ENCODE measurements at regions of chr1 and their contacts with region 1.

Region 1: DNA sequence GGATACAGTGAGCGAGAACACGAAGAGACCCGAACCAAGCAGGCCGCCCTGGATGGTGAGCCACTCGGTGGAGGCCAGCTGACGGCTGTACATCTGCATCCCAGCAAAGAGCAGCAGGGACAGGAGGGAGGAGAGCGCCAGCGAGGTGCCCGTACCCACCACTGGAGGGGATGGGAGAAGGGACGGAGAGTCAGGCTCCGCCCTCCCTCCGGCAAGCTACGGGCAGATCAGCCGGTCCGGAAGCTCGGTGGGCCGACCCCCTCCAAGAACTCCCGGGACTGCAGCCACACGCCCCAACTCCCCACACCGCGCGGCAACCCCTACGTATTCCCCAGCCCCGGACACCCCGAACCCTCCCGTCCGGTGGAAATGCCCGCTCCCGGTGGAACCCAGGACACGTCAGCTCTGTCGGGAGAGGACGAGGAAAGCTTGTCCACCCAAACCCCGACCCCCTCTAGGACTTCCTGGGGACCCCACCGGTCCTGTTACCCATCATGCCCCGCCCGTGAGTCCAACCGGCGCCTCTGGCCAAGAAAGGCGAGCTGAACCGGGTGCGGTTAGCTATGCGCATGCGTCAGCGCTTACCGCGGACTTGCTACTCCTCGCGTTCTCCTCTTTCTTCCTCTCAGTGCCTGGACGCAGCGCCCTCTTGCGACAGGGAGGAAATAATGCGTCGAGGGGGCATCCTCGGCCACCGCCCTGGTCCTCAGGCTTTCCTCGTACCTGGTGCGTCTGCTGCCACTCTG is at the start of gene KRTCAP2:
- DNase-seq: peak; percentile 92 to 95 (median 93)
- H3K4me3 ChIP-seq: peak within 1 kb of the TSS; percentile 83 to 93
- H3K4me3 Mint-ChIP-seq: peak within 1 kb of the TSS; percentile 96 to 100 (median 99)
- H3K27ac ChIP-seq: peak within 1 kb of the TSS; percentile 87
- H3K27ac Mint-ChIP-seq: peak within 1 kb of the TSS; percentile 97 to 100 (median 99)
- H3K4me1 ChIP-seq: peaks cover 52% of the 10 kb centered on the region
- H3K4me1 Mint-ChIP-seq: peaks cover 31 to 64% (median 47%) of the 10 kb centered on the region in 4 donors
- H3K27me3 ChIP-seq: no peaks in the 10 kb centered on the region
- H3K27me3 Mint-ChIP-seq: no peaks in the 10 kb centered on the region
- total RNA-seq, gene KRTCAP2: 173 to 180 TPM

Region 2: GRCh38 chr1:154553056-154554030 is 619.6 kb before region 1 on chr1:
- CTCF ChIA-PET with region 1: no interaction called
- POLR2A ChIA-PET with region 1: no interaction called
- intact Hi-C with region 1: no loop called
- DNase-seq: peak in 1 of 5 donors; percentile 13
- H3K4me3 ChIP-seq: no peak overlapping the region
- H3K4me3 Mint-ChIP-seq: peak overlapping the region in 1 of 8 donors; percentile 8
- H3K27ac ChIP-seq: no peak overlapping the region
- H3K27ac Mint-ChIP-seq: peak overlapping the region in 1 of 7 donors; percentile 73
- H3K4me1 ChIP-seq: peaks cover 42% of the 10 kb centered on the region
- H3K4me1 Mint-ChIP-seq: peaks cover 29 to 63% (median 39%) of the 10 kb centered on the region in 4 donors
- H3K27me3 ChIP-seq: no peaks in the 10 kb centered on the region
- H3K27me3 Mint-ChIP-seq: no peaks in the 10 kb centered on the region

Region 3: GRCh38 chr1:155084722-155085503 is 88.0 kb before region 1 on chr1:
- CTCF ChIA-PET with region 1: interaction called, 229 read pairs
- POLR2A ChIA-PET with region 1: interaction called, 27 read pairs
- intact Hi-C with region 1: loop called (anchors 2 kb)
- DNase-seq: peak; percentile 92 to 96 (median 92)
- H3K4me3 ChIP-seq: peak overlapping the region; percentile 80 to 95
- H3K4me3 Mint-ChIP-seq: peak overlapping the region; percentile 91 to 98 (median 94)
- H3K27ac ChIP-seq: peak overlapping the region; percentile 54
- H3K27ac Mint-ChIP-seq: peak overlapping the region; percentile 88 to 98 (median 94)
- H3K4me1 ChIP-seq: peaks cover 57% of the 10 kb centered on the region
- H3K4me1 Mint-ChIP-seq: peaks cover 22 to 44% (median 34%) of the 10 kb centered on the region in 4 donors
- H3K27me3 ChIP-seq: peaks cover 34% of the 10 kb centered on the region
- H3K27me3 Mint-ChIP-seq: peaks cover 13 to 30% of the 10 kb centered on the region in 2 donors

Region 4: DNA sequence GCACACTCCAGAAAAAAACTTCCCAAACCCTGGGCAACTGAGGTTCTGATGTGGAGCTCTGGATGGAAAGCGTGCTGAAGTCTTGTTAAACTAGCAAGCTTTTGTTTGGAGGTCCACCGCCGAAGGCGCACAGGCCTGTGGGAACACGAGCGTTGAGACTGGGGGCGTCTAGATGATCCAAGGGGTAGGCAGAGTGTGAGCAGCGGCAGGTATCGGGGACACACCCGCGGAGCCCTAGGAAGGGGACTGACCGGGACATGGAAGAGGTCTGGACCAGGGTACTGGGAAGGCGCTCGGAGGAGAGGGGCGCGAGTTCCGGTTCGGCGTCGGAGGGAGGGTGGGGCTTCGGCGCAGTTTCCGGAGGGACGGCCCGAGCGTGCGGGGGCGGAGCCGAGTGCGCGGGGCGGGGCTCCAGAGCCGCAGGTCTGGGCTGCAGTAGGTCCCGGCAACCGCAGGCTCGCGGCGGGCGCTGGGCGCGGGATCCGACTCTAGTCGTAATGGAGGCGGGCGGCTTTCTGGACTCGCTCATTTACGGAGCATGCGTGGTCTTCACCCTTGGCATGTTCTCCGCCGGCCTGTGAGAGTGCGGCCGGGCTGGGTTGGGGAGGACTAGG is 37.4 kb before region 1 on chr1 and contains the start of gene SLC50A1:
- CTCF ChIA-PET with region 1: interaction called, 27 read pairs
- POLR2A ChIA-PET with region 1: interaction called, 35 read pairs
- intact Hi-C with region 1: loop called (anchors 1 kb)
- DNase-seq: peak; percentile 90 to 94 (median 91)
- H3K4me3 ChIP-seq: peak within 1 kb of the TSS; percentile 78 to 93
- H3K4me3 Mint-ChIP-seq: peak within 1 kb of the TSS; percentile 94 to 99 (median 98)
- H3K27ac ChIP-seq: peak within 1 kb of the TSS; percentile 97
- H3K27ac Mint-ChIP-seq: peak within 1 kb of the TSS; percentile 97 to 100 (median 99)
- H3K4me1 ChIP-seq: peaks cover 35% of the 10 kb centered on the region
- H3K4me1 Mint-ChIP-seq: peaks cover 23 to 71% (median 46%) of the 10 kb centered on the region in 4 donors
- H3K27me3 ChIP-seq: no peaks in the 10 kb centered on the region
- H3K27me3 Mint-ChIP-seq: no peaks in the 10 kb centered on the region
- total RNA-seq, gene SLC50A1: 20.1 to 22.8 TPM

Region 5: GRCh38 chr1:155193275-155193990 is 20.5 kb after region 1 on chr1:
- CTCF ChIA-PET with region 1: interaction called, 145 read pairs
- POLR2A ChIA-PET with region 1: interaction called, 48 read pairs
- intact Hi-C with region 1: loop called (anchors 1 kb)
- DNase-seq: peak; percentile 60 to 72 (median 62)
- H3K4me3 ChIP-seq: peak overlapping the region; percentile 58 to 73
- H3K4me3 Mint-ChIP-seq: peak overlapping the region; percentile 87 to 97 (median 92)
- H3K27ac ChIP-seq: peak overlapping the region; percentile 67
- H3K27ac Mint-ChIP-seq: peak overlapping the region; percentile 91 to 99 (median 98)
- H3K4me1 ChIP-seq: peaks cover 27% of the 10 kb centered on the region
- H3K4me1 Mint-ChIP-seq: peaks cover 19 to 38% (median 24%) of the 10 kb centered on the region in 4 donors
- H3K27me3 ChIP-seq: no peaks in the 10 kb centered on the region
- H3K27me3 Mint-ChIP-seq: no peaks in the 10 kb centered on the region

Region 6: GRCh38 chr1:155227261-155228095 is 54.6 kb after region 1 on chr1:
- CTCF ChIA-PET with region 1: interaction called, 22 read pairs
- POLR2A ChIA-PET with region 1: interaction called, 30 read pairs
- intact Hi-C with region 1: loop called (anchors 1 kb)
- DNase-seq: peak; percentile 94 to 99 (median 98)
- H3K4me3 ChIP-seq: peak overlapping the region; percentile 80 to 86
- H3K4me3 Mint-ChIP-seq: peak overlapping the region; percentile 78 to 93 (median 88)
- H3K27ac ChIP-seq: peak overlapping the region; percentile 69
- H3K27ac Mint-ChIP-seq: peak overlapping the region; percentile 77 to 97 (median 93)
- H3K4me1 ChIP-seq: peaks cover 19% of the 10 kb centered on the region
- H3K4me1 Mint-ChIP-seq: peaks cover 14 to 34% (median 25%) of the 10 kb centered on the region in 4 donors
- H3K27me3 ChIP-seq: no peaks in the 10 kb centered on the region
- H3K27me3 Mint-ChIP-seq: no peaks in the 10 kb centered on the region

Region 7: GRCh38 chr1:155268634-155269033 is 95.7 kb after region 1 on chr1:
- CTCF ChIA-PET with region 1: no interaction called
- POLR2A ChIA-PET with region 1: no interaction called
- intact Hi-C with region 1: no loop called
- DNase-seq: no peak
- H3K4me3 ChIP-seq: no peak overlapping the region
- H3K4me3 Mint-ChIP-seq: no peak overlapping the region
- H3K27ac ChIP-seq: no peak overlapping the region
- H3K27ac Mint-ChIP-seq: no peak overlapping the region
- H3K4me1 ChIP-seq: peaks cover 16% of the 10 kb centered on the region
- H3K4me1 Mint-ChIP-seq: peaks cover 17 to 30% (median 22%) of the 10 kb centered on the region in 4 donors
- H3K27me3 ChIP-seq: no peaks in the 10 kb centered on the region
- H3K27me3 Mint-ChIP-seq: no peaks in the 10 kb centered on the region

Region 8: DNA sequence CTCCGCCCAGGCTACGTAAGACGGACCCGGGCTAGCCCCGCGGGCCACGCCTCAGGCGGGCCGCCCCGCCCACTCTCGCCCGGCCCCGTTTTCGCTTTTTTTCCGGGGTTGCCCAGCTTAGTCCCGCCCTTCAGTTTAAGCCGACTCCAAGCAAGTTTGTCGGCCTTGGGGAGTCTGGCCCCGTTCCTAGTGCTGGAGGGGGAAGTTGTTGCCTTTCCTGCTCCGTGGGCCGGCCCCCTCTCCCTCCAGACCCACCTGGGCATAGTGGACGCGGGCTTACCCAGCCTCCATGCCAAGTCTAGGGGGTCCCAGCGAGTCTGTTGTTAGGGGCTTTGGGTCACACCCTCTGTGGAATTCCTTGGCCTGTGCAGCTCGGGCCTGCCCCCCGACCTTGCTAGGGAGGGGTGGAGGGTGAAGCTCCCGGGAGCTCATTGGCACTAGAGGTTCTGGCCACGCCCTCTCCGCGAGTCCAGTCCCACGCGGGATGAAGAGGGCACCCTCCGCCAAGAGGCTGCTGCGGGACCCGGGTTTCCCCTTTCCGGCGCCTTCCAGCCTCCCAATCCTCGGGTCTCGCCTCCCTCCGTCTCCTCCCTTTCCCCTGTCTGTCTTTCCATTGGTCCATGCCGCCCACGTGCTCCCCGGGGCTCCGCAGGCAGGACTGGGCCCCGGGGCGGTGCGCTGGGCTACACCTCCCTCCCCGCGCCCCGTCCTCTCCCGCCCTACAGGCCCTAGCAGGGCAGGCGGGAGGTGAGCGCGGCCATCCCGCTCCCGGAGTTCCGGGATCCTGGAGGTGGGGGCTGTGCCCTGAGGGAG is 151.1 kb after region 1 on chr1:
- CTCF ChIA-PET with region 1: interaction called, 3 read pairs
- POLR2A ChIA-PET with region 1: interaction called, 4 read pairs
- intact Hi-C with region 1: loop called (anchors 10 kb)
- DNase-seq: peak; percentile 83 to 93 (median 85)
- H3K4me3 ChIP-seq: peak overlapping the region; percentile 91 to 96
- H3K4me3 Mint-ChIP-seq: peak overlapping the region; percentile 70 to 91 (median 88)
- H3K27ac ChIP-seq: peak overlapping the region; percentile 96
- H3K27ac Mint-ChIP-seq: peak overlapping the region; percentile 82 to 93 (median 90)
- H3K4me1 ChIP-seq: peaks cover 31% of the 10 kb centered on the region
- H3K4me1 Mint-ChIP-seq: peaks cover 14 to 46% (median 29%) of the 10 kb centered on the region in 4 donors
- H3K27me3 ChIP-seq: no peaks in the 10 kb centered on the region
- H3K27me3 Mint-ChIP-seq: no peaks in the 10 kb centered on the region